Heart left ventricle (tissue), 16 donors: ENCODE measurements at regions of chr19 and their contacts with region 1.

Region 1: GRCh38 chr19:10769533-10770491 is 51.9 kb downstream of the DNM2 start:
- DNase-seq: peak; percentile 73 to 88 (median 83)
- ATAC-seq: peak; percentile 80 to 86 (median 82)
- H3K4me3 ChIP-seq: peak overlapping the region in 3 of 12 donors; percentile 0 to 18 (median 10)
- H3K27ac ChIP-seq: peak overlapping the region; percentile 70 to 97 (median 88)
- H3K4me1 ChIP-seq: peaks cover 21 to 60% (median 55%) of the 10 kb centered on the region in 12 donors
- H3K27me3 ChIP-seq: no peaks in the 10 kb centered on the region
- CTCF ChIP-seq: peak in 11 of 12 donors; percentile 16 to 61 (median 43)
- POLR2A ChIP-seq: no peak

Region 2: GRCh38 chr19:10568826-10569651 is 200.8 kb before region 1 on chr19 and contains the start of gene CDKN2D:
- intact Hi-C with region 1: no loop called
- DNase-seq: peak; percentile 99 to 100 (median 100)
- ATAC-seq: peak; percentile 86 to 94 (median 92)
- H3K4me3 ChIP-seq: peak within 1 kb of the TSS; percentile 66 to 90 (median 82)
- H3K27ac ChIP-seq: peak within 1 kb of the TSS in 11 of 12 donors; percentile 59 to 91 (median 85)
- H3K4me1 ChIP-seq: peaks cover 8 to 54% (median 33%) of the 10 kb centered on the region in 12 donors
- H3K27me3 ChIP-seq: no peaks in the 10 kb centered on the region
- CTCF ChIP-seq: peak; percentile 22 to 62 (median 40)
- POLR2A ChIP-seq: peak; percentile 61 to 93
- total RNA-seq, gene CDKN2D: 6.8 to 19.9 (median 11.8) TPM

Region 3: DNA sequence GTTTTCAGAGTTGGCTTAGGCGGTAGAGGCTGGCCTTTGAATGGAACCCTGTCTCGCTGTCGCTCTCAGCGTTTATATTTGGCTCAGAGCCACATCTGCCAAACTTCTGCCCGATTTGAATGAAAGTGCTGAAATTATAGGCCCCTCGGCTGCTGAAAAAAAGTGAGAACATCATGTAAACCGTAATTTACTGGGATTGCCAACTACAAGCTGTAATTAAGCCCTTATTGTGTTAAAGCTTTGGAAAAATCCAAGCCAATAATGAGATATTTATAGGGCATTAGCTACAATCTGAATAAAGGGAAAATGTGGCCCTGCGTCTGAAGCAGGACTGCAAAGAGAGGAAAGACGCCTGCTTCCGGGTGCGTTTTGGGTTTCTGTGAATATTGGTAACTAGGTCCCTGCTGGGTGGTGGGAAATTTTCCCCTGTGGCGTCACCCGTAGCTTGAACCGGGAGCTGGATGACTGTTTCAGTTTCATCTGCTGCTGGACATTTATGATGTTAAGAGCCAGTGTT is 42.1 kb before region 1 on chr19:
- intact Hi-C with region 1: loop called in 1 of 10 experiments (anchors 2 kb)
- DNase-seq: no peak
- ATAC-seq: no peak
- H3K4me3 ChIP-seq: no peak overlapping the region
- H3K27ac ChIP-seq: peak overlapping the region in 9 of 12 donors; percentile 8 to 90 (median 78)
- H3K4me1 ChIP-seq: peaks cover 3 to 92% (median 60%) of the 10 kb centered on the region in 12 donors
- H3K27me3 ChIP-seq: no peaks in the 10 kb centered on the region
- CTCF ChIP-seq: no peak
- POLR2A ChIP-seq: no peak

Region 4: DNA sequence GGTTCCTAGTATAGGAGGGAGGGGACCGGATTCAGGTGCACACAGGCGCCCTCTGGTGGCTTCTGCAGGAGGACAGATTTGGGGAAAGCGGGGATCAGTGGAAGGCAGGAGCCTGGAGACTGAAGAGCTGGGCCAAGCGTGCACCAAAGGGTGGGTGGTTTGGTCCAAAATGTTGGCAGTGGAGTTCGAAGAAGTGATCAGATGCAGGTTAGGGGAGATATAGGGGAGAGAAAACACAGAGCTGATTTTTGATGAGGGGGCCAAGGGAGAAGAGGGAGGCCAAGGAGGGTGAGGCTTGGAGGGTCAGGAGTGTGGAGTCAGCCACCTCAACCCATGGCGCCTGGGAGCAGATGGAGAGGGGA is 94.7 kb after region 1 on chr19:
- intact Hi-C with region 1: loop called in 9 of 10 experiments (anchors 1 to 5 kb)
- DNase-seq: peak; percentile 82 to 92 (median 84)
- ATAC-seq: peak; percentile 69 to 84 (median 82)
- H3K4me3 ChIP-seq: peak overlapping the region in 3 of 12 donors; percentile 13 to 25 (median 21)
- H3K27ac ChIP-seq: peak overlapping the region in 1 of 12 donors; percentile 23
- H3K4me1 ChIP-seq: peaks cover 0 to 37% (median 1%) of the 10 kb centered on the region in 12 donors
- H3K27me3 ChIP-seq: no peaks in the 10 kb centered on the region
- CTCF ChIP-seq: peak; percentile 77 to 95 (median 89)
- POLR2A ChIP-seq: no peak

Region 5: GRCh38 chr19:11699931-11700794 is 930.4 kb after region 1 on chr19:
- intact Hi-C with region 1: no loop called
- DNase-seq: no peak
- ATAC-seq: no peak
- H3K4me3 ChIP-seq: no peak overlapping the region
- H3K27ac ChIP-seq: no peak overlapping the region
- H3K4me1 ChIP-seq: peaks cover 0 to 4% (median 2%) of the 10 kb centered on the region in 12 donors
- H3K27me3 ChIP-seq: no peaks in the 10 kb centered on the region
- CTCF ChIP-seq: peak; percentile 55 to 79 (median 66)
- POLR2A ChIP-seq: no peak